Panc1 (cell line): ENCODE measurements at regions of chr11 and their contacts with region 1.

Region 1: GRCh38 chr11:130636722-130637517 is 188.5 kb downstream of the ADAMTS15 start:
- DNase-seq: peak; percentile 97
- ATAC-seq: peak; percentile 91
- H3K4me3 ChIP-seq: peak overlapping the region; percentile 3 to 40; a peak in 3 of 4 replicates
- H3K27ac ChIP-seq: peak overlapping the region; percentile 99
- H3K4me1 ChIP-seq: peaks cover 61% of the 10 kb centered on the region
- H3K27me3 ChIP-seq: no peaks in the 10 kb centered on the region
- CTCF ChIP-seq: no peak

Region 2: DNA sequence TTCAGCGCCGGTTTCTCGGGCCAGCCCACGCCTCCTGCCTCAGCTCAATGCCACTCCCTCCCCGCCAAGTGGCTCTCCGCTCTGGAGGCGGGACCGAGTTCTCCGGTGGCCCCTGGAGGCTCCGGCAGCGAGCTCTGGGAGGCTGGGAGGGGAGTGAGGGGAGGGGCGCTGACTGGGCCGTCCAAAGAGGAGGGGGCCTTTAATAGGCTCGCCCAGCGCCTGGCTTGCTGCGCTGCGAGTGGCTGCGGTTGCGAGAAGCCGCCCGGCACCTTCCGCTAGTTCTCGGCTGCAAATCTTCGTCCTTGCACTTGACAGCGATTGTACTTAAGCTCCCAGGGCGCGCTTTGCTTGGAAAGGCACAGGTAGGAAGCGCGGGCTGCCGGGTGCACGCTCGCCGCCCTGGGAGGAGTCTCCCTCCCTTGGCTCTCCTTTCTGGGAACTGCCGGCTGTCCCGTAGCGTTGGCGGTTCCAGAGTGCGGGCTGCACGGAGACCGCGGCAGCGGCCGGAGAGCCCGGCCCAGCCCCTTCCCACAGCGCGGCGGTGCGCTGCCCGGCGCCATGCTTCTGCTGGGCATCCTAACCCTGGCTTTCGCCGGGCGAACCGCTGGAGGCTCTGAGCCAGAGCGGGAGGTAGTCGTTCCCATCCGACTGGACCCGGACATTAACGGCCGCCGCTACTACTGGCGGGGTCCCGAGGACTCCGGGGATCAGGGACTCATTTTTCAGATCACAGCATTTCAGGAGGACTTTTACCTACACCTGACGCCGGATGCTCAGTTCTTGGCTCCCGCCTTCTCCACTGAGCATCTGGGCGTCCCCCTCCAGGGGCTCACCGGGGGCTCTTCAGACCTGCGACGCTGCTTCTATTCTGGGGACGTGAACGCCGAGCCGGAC is 188.3 kb before region 1 on chr11 and contains the start of gene ADAMTS15:
- CTCF ChIA-PET with region 1: no interaction called
- POLR2A ChIA-PET with region 1: interaction called, 4 read pairs
- in situ Hi-C with region 1: no loop called
- intact Hi-C with region 1: loop called (anchors 5 kb)
- DNase-seq: no peak
- ATAC-seq: peak; percentile 95
- H3K4me3 ChIP-seq: peak within 1 kb of the TSS; percentile 73 to 89
- H3K27ac ChIP-seq: peak within 1 kb of the TSS; percentile 67
- H3K4me1 ChIP-seq: peaks cover 16% of the 10 kb centered on the region
- H3K27me3 ChIP-seq: no peaks in the 10 kb centered on the region
- CTCF ChIP-seq: no peak
- total RNA-seq, gene ADAMTS15: 39.9 TPM

Region 3: DNA sequence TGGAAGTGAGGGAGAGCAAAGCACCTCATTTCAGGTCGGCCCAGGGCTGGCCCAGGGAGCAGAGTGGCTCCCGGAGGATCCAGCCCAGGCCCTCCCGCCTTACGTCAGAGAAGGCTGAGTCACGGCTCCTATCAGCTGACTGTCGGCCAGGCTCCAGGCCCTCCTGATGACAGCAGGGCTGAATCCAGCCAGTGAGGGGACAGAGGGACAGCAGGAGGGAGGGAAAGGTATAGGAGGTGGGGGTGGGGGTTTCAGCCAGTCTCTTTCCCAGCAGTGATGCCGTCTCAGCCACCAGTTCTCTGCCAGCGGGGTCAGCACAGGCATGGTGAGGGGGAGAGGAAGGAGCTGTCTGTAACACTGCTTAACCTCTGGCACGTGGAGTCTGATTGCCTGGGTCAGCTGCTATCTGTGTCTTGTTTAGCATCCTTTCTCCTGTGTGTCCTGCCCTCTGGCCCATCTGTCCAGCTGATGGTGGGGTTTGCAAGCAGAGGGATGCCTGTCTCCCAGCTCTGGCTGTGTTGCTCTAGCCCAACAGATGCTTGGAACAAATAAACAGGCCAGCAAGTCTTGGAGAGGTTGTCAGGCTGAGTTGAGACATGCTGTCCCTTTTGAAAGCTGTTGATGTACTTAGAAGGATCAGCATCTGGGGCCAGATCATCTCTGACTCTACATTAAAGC is 114.5 kb before region 1 on chr11:
- CTCF ChIA-PET with region 1: no interaction called
- POLR2A ChIA-PET with region 1: no interaction called
- in situ Hi-C with region 1: no loop called
- intact Hi-C with region 1: no loop called
- DNase-seq: no peak
- ATAC-seq: peak; percentile 90
- H3K4me3 ChIP-seq: no peak overlapping the region
- H3K27ac ChIP-seq: peak overlapping the region; percentile 36; the same call in 1 of the 2 replicates
- H3K4me1 ChIP-seq: peaks cover 5% of the 10 kb centered on the region; the same call in 1 of the 2 replicates
- H3K27me3 ChIP-seq: no peaks in the 10 kb centered on the region
- CTCF ChIP-seq: no peak